PC-3 (cell line): ENCODE measurements at regions of chr20 and their contacts with region 1.

Region 1: DNA sequence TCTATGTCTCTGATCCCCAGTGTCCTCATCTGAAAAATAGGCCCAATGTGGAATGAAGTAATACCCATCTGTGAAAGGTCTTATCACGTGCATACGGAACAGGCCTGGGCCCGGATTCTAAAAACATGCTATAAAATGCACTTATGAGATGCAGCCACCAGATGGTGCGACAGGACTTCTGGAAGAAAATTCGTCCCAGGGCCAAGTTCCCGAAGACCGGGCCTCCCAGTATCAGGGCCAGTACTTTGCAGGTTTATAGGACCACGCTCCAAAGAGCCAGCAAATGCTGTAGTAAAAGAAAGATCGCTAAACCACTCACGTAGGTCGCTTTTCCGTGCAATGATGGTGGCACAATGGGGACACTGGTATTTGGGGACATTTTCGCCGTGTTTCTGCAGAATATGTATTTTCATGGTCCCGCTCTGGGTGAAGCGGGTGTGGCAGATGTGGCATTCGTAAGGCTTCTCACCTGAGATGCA is 10.6 kb downstream of the CTCFL start:
- DNase-seq: peak; percentile 88
- ATAC-seq: peak; percentile 60
- H3K4me3 ChIP-seq: no peak overlapping the region
- H3K27ac ChIP-seq: no peak overlapping the region
- H3K4me1 ChIP-seq: no peaks in the 10 kb centered on the region
- H3K27me3 ChIP-seq: no peaks in the 10 kb centered on the region
- CTCF ChIP-seq: peak; percentile 96

Region 2: DNA sequence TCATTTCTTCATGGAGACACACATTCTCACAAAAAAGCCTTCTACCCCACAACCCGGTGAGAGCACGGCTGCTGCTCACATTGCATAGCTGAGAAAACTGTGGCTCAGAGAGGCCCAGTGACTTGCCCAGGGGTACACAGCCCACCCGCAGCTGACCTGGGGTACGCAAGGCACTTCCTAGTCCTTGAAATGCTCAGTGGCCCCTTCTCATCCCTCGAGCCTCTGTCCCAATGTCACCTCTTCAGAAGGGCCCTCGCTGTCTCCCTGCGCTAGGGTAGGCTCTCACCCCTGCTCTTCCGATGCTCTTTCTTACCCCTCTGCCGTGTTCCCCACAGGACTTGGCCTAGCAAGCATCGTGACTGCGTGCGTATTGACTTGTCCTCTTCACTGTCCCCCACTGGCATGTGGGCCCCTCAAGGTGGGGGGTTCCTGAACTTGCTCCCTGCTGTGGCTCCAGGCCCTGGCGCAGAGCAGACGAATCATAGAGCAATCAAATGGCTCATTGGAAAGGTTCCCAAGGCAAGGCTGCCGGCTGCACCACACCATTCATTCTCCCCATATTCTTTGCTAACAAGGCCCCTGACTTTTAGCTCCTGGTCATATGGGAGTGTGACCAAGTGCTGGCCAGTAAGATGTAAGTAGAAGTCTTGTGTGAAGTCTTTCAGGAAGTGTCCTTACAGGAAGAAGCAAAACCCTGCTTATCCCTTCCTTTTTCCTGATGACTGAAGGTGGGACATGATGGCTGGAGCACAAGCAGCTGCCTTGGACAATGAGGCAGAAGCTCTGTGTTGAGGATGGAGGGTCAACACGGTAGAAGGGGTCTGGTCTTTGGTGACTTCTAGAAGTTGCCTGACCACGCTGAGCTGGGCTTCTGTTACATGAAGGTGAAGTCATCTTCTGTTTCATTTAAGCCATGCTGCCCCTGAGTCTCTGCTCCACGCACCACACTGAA is 69.3 kb after region 1 on chr20:
- CTCF ChIA-PET with region 1: no interaction called
- POLR2A ChIA-PET with region 1: interaction called, 11 read pairs
- intact Hi-C with region 1: no loop called
- DNase-seq: no peak
- ATAC-seq: no peak
- H3K4me3 ChIP-seq: no peak overlapping the region
- H3K27ac ChIP-seq: no peak overlapping the region
- H3K4me1 ChIP-seq: peaks cover 10% of the 10 kb centered on the region
- H3K27me3 ChIP-seq: peaks cover 62% of the 10 kb centered on the region
- CTCF ChIP-seq: 0 out of 2 replicates have a peak, but pooled peaks have one; percentile 7

Region 3: DNA sequence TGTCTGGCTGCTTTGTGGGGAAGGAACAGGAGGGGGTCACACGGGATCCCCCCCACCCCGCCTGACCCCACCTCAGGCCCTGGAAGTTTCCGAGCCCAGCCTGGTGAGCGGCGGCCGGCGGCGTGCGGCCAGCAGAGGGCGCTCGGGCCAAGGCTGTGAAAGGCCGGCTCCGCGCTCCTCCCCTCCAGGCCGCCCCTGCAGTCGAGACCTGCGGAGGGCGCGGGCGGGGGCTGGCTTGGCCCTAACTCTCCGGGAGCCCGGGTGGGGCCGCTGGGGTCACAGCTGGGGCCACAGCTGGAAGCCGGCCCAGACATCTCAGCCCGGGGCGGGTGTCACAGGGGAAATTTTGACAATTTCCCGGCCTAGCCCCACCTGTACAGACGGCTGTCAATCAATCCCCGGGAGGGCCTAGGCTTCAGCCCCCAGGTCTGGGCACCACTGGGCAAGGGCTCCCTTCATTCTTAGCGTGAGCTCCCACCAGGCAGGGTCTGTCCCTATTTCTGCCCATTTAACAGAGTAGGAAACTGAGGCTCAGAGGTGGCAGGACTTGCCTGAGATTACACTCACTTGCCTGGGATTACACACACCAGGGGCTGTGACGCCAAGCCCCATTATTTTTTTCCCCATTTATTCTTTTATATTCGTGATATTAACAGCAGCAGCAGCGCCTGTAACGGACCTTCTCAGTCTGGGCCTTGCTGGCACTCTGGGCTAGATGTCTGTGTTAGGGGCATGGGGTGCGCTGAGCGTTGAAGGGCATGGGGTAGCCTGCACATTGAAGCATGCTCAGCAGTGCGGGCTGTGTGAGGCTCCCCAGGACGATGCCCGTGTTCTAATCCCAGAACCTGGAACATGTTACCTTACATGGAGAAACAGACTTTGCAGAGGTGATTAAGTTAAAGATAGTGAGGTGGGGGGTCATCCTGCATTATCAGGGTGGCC is 83.0 kb after region 1 on chr20:
- CTCF ChIA-PET with region 1: interaction called, 3 read pairs
- POLR2A ChIA-PET with region 1: no interaction called
- intact Hi-C with region 1: loop called (anchors 1 kb)
- DNase-seq: peak; percentile 72
- ATAC-seq: peak; percentile 79
- H3K4me3 ChIP-seq: peak overlapping the region; percentile 62
- H3K27ac ChIP-seq: no peak overlapping the region
- H3K4me1 ChIP-seq: peaks cover 18% of the 10 kb centered on the region
- H3K27me3 ChIP-seq: no peaks in the 10 kb centered on the region
- CTCF ChIP-seq: peak; percentile 98

Region 4: DNA sequence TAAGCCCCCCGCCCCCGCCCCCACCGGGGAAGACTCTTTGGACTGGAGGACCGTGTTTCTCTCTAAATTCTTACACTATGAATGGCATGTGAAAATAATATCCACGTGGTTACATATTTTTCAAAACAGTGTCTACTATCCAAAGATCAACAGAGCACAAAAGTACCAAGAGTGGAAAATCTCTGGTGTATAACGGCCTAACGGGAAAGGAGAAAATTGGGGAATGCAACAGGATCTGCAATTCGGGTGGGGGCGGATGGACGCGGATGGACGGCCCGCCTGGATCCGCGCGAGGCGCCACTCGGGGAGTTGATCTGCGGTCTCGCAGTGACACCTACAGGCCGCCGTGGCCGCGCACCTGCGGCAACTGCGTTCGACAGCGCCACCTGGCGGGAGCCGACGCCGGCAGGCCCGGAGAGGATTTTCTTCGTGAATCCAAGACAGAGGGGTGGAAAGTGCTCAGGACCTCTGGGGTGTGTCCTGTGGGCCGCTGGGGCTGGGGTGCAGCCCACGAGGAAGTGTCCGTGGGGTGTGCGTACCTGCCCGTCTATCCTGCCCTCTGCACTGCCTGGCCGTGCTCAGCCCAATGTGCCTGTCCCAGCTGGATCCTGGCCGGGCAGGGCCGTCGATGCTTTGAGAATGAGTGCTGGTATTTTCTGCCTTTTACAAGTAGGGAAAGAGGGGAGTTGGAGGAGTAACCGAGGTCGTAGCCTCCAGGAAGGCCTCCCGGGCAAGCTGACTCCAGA is 695.5 kb after region 1 on chr20:
- CTCF ChIA-PET with region 1: no interaction called
- POLR2A ChIA-PET with region 1: no interaction called
- intact Hi-C with region 1: loop called (anchors 1 kb)
- DNase-seq: peak; percentile 94
- ATAC-seq: peak; percentile 89
- H3K4me3 ChIP-seq: peak overlapping the region; percentile 54
- H3K27ac ChIP-seq: no peak overlapping the region
- H3K4me1 ChIP-seq: peaks cover 6% of the 10 kb centered on the region; the same call in 1 of the 2 replicates
- H3K27me3 ChIP-seq: no peaks in the 10 kb centered on the region
- CTCF ChIP-seq: peak; percentile 100

Region 5: GRCh38 chr20:58986968-58987517 is 1472.7 kb after region 1 on chr20:
- CTCF ChIA-PET with region 1: no interaction called
- POLR2A ChIA-PET with region 1: no interaction called
- intact Hi-C with region 1: no loop called
- DNase-seq: no peak
- ATAC-seq: no peak
- H3K4me3 ChIP-seq: no peak overlapping the region
- H3K27ac ChIP-seq: no peak overlapping the region
- H3K4me1 ChIP-seq: peaks cover 7% of the 10 kb centered on the region; the same call in 1 of the 2 replicates
- H3K27me3 ChIP-seq: no peaks in the 10 kb centered on the region
- CTCF ChIP-seq: no peak